GM10248 (cell line): ENCODE measurements at regions of chr11 and their contacts with region 1.

Region 1: GRCh38 chr11:35391922-35392813 is 27.2 kb downstream of the SLC1A2 start:
- DNase-seq: peak; percentile 75
- CTCF ChIP-seq: peak; percentile 91

Region 2: DNA sequence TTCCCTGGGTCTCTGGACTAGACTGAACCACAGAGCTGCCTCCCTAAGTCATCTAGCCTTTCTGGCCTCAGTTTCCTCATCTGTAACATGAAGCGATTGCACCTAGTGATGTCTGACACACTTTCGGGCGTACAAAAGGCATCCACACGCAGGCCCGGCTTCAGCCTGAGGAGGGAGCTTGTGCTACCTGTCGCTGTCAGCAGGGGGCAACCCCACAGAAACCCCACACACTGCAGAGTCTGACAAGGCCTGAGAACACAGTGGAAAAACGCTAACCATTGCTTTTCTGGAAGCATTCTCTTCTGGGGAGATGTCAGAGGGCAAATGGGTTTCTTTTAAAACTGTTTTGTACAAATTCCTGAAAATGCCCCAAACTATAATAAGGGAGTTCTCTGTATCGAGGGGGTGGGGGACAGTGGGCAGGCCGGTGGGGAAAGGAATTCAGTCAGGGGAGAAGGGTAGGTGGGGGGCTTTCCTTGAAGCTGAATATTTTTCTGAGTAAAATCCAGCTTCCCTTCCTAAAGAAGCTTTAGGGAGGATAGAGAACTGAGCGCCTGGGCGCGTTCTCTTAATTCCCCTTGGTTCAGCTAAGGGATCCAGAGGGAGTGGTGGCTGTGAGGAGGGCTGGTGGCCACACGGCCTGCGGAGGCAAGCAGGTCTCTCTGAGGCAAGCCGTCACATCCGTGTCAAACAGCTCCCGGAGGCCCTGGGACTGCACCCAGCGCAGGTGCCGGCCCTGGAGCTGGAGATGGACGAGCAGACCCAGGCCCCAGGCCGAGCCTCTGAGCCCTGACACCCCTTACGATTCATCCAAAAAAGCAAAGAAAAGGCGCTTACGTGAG is 879.1 kb before region 1 on chr11:
- CTCF ChIA-PET with region 1: interaction called, 43 read pairs
- POLR2A ChIA-PET with region 1: no interaction called
- DNase-seq: peak; percentile 77
- CTCF ChIP-seq: peak; percentile 73

Region 3: GRCh38 chr11:34926101-34926830 is 465.9 kb before region 1 on chr11:
- CTCF ChIA-PET with region 1: interaction called, 107 read pairs
- POLR2A ChIA-PET with region 1: no interaction called
- DNase-seq: no peak
- CTCF ChIP-seq: peak; percentile 58

Region 4: GRCh38 chr11:35373284-35373933 is 18.8 kb before region 1 on chr11:
- CTCF ChIA-PET with region 1: interaction called, 10 read pairs
- POLR2A ChIA-PET with region 1: no interaction called
- DNase-seq: no peak
- CTCF ChIP-seq: no peak

Region 5: DNA sequence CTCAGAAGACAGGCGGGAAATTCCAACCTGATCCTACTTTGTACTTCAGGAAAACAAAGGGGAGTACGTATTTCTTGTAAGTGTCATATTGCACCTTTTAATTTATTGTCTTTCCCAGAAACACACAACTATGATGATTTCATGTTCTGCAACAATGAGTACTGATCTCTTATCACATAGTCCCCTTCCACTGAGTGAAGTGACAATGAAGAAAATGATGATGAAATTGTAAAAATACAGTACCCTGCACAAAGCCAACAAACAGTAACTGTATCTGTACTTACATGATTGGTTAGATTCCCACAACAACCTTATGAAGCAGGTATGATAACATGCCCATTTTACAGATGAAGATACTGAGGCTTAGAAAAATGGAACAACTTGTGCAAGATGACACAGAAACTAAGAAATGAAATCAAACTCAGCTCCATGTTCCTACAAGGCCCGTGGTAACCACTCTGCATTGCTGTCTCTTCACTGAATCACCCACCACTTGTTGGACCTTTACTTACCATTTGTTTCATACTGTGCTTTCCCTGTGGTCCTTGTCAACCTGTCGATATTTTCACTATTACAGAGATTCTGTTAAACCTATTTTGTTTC is 10.3 kb before region 1 on chr11:
- CTCF ChIA-PET with region 1: interaction called, 11 read pairs
- POLR2A ChIA-PET with region 1: no interaction called
- DNase-seq: no peak
- CTCF ChIP-seq: no peak

Region 6: GRCh38 chr11:35404388-35404775 is 12.2 kb after region 1 on chr11:
- CTCF ChIA-PET with region 1: interaction called, 19 read pairs
- POLR2A ChIA-PET with region 1: interaction called, 3 read pairs
- DNase-seq: no peak
- CTCF ChIP-seq: peak; percentile 42

Region 7: DNA sequence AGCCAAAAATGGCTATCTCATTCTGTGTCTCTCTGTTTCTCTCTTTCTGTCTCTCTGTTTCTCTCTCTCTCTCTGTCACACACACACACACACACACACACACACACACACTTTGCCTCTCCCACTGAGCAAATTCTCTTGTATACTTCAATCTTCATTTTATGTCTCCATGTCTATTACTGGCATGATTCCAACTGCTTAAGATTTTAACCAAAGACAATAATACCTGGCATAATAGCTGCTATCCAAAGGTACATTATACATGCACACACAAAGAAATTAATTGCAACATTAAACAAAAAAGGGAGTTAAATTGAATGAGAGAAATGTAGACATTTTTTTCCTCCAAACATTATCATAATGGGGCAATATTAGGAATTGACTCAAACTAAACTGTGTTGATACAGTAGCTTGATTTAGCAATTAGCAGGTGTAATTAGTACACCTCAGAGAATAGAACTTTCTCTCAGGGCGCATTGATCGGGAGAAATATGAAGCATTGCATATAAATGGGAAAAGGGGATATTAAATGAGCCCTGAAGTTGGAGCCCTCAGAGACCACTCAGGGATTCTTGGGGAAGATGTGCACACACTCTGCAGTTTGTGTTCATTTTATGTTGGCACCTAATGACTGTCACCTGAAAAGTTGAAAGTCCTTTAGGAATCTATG is 44.5 kb after region 1 on chr11:
- CTCF ChIA-PET with region 1: no interaction called
- POLR2A ChIA-PET with region 1: no interaction called
- DNase-seq: no peak
- CTCF ChIP-seq: no peak